Gastrocnemius medialis (tissue), 4 donors: ENCODE measurements at regions of chr15 and their contacts with region 1.

Region 1: DNA sequence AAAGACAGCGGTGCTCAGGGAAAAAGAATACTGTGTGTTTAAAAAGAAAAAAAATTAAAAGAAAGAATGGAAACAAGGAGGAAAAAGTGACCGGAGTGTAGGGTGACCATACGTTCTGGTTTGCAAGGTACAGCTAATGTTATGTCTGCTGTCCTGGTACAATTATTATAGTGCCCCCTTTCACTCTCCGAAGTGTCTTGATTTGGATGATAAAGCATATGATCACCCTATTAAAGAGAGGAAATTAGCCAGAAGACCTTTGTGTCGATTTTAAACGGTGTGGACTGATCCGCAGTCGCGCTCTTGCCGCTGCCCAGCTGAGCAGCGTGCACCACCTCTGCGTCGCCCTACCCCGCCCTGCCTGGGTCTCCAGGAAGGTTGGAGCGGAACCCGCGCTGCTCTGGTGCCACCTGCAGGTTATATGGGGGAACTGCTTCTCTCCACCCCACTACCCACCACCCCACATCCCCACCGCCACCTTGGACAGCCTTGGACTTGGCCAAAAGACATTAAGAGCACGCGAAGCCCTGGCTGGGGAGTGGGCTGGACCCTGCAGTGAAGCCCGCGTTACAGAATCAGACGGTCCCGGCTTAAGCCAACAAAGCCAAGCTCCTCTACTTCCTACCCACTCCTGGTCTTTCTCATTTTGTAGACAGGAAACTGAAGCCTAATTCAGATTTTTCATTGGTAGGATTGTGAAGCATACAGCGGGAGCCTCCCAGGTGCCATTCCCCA is 41.2 kb upstream of the UBE2Q2 start:
- DNase-seq: peak; percentile 53 to 66
- ATAC-seq: peak; percentile 87 to 97
- H3K4me3 ChIP-seq: peak overlapping the region; percentile 17 to 52 (median 38)
- H3K27ac ChIP-seq: no peak overlapping the region
- H3K4me1 ChIP-seq: peaks cover 0 to 3% of the 10 kb centered on the region in 2 donors
- H3K27me3 ChIP-seq: no peaks in the 10 kb centered on the region
- CTCF ChIP-seq: peak; percentile 74 to 98 (median 82)
- POLR2A ChIP-seq: no peak

Region 2: GRCh38 chr15:75229191-75230015 is 572.6 kb before region 1 on chr15:
- in situ Hi-C with region 1: no loop called
- intact Hi-C with region 1: loop called (anchors 5 kb)
- DNase-seq: no peak
- ATAC-seq: no peak
- H3K4me3 ChIP-seq: no peak overlapping the region
- H3K27ac ChIP-seq: no peak overlapping the region
- H3K4me1 ChIP-seq: no peaks in the 10 kb centered on the region
- H3K27me3 ChIP-seq: peaks cover 0 to 2% (median 0%) of the 10 kb centered on the region in 3 donors
- CTCF ChIP-seq: no peak
- POLR2A ChIP-seq: no peak

Region 3: GRCh38 chr15:75367913-75368688 is 433.9 kb before region 1 on chr15 and contains the start of gene MAN2C1:
- in situ Hi-C with region 1: no loop called
- intact Hi-C with region 1: loop called (anchors 5 kb)
- DNase-seq: peak; percentile 92 to 97
- ATAC-seq: peak; percentile 89 to 93
- H3K4me3 ChIP-seq: peak within 1 kb of the TSS; percentile 87 to 99 (median 96)
- H3K27ac ChIP-seq: peak within 1 kb of the TSS; percentile 96 to 100 (median 98)
- H3K4me1 ChIP-seq: peaks cover 18 to 19% of the 10 kb centered on the region in 2 donors
- H3K27me3 ChIP-seq: no peaks in the 10 kb centered on the region
- CTCF ChIP-seq: peak in 3 of 5 experiments; percentile 72 to 81 (median 80)
- POLR2A ChIP-seq: peak; percentile 86 to 89
- total RNA-seq, gene MAN2C1: 38.9 to 116 (median 62.8) TPM

Region 4: DNA sequence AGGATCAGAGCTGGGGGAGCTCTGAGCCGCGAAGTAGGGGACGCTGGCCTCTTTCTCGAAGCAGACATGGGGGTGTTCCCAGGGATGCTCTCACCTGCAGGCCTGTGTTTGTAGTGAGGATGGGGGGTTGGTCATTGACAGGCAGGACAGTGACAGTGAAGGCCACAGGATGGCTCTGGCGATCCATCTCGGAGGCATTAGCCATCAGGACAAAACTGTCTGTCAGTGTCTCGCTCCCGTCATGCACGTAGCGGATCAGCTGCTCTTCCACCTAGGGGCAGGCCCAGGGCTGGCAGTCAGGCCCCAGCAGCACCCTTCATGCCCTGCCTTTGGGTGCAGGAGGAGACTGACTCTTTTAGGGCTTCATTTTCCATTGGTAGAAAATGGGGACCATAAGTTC is 117.4 kb before region 1 on chr15:
- in situ Hi-C with region 1: no loop called
- intact Hi-C with region 1: loop called (anchors 2 kb)
- DNase-seq: no peak
- ATAC-seq: no peak
- H3K4me3 ChIP-seq: no peak overlapping the region
- H3K27ac ChIP-seq: no peak overlapping the region
- H3K4me1 ChIP-seq: no peaks in the 10 kb centered on the region
- H3K27me3 ChIP-seq: no peaks in the 10 kb centered on the region
- CTCF ChIP-seq: no peak
- POLR2A ChIP-seq: no peak

Region 5: GRCh38 chr15:75723847-75724660 is 78.0 kb before region 1 on chr15:
- in situ Hi-C with region 1: no loop called
- intact Hi-C with region 1: loop called (anchors 1 kb)
- DNase-seq: peak; percentile 55 to 64
- ATAC-seq: peak in 1 of 2 donors; percentile 34
- H3K4me3 ChIP-seq: no peak overlapping the region
- H3K27ac ChIP-seq: peak overlapping the region in 3 of 4 donors; percentile 38 to 43 (median 42)
- H3K4me1 ChIP-seq: no peaks in the 10 kb centered on the region
- H3K27me3 ChIP-seq: no peaks in the 10 kb centered on the region
- CTCF ChIP-seq: no peak
- POLR2A ChIP-seq: no peak